CD4-positive, alpha-beta memory T cell (primary cell): ENCODE measurements at regions of chr16 and their contacts with region 1.

Region 1: DNA sequence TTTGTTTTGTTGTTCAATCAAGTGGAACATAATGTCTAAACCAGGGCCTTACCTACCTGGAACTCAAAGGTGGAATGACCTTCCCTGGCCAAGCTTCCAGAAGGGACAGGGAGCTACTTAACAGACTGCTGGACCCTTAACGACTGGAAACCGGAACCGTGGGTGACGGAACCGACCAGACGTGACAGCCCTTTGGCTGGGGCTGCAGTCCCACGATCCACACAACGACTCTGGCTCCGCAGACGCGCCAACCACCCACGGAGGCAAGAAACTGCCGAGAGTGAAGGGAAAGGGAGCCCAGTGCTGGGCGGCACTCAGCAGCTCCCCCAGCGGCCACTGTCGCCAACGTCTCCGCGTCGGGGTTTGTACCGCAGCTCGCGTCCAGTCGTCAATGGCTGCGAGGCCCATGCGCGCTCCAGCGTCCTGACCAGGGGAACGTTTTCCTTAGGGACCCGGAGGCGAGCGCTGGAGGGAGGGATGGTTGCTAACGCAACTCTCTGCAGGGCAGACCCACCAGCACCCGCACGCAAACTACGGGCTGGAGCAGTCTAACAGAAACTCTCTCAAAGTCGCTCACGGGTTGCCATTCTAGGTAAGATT is 5.5 kb upstream of the KIF22 start:
- DNase-seq: peak; percentile 70 to 77 (median 74)
- H3K4me3 ChIP-seq: peak overlapping the region in 1 of 2 donors; percentile 44
- H3K4me3 Mint-ChIP-seq: peak overlapping the region; percentile 57 to 86 (median 78)
- H3K27ac ChIP-seq: peak overlapping the region; percentile 47
- H3K27ac Mint-ChIP-seq: peak overlapping the region; percentile 33 to 92 (median 87)
- H3K4me1 ChIP-seq: peaks cover 25% of the 10 kb centered on the region
- H3K4me1 Mint-ChIP-seq: peaks cover 12 to 30% (median 24%) of the 10 kb centered on the region in 4 donors
- H3K27me3 ChIP-seq: no peaks in the 10 kb centered on the region
- H3K27me3 Mint-ChIP-seq: no peaks in the 10 kb centered on the region

Region 2: GRCh38 chr16:29710227-29711219 is 74.5 kb before region 1 on chr16:
- CTCF ChIA-PET with region 1: interaction called, 8 read pairs
- POLR2A ChIA-PET with region 1: interaction called, 6 read pairs
- intact Hi-C with region 1: loop called (anchors 1 kb)
- DNase-seq: peak; percentile 64 to 73 (median 69)
- H3K4me3 ChIP-seq: no peak overlapping the region
- H3K4me3 Mint-ChIP-seq: peak overlapping the region in 1 of 8 donors; percentile 12
- H3K27ac ChIP-seq: no peak overlapping the region
- H3K27ac Mint-ChIP-seq: peak overlapping the region in 6 of 7 donors; percentile 8 to 95 (median 89)
- H3K4me1 ChIP-seq: peaks cover 10% of the 10 kb centered on the region
- H3K4me1 Mint-ChIP-seq: peaks cover 6 to 25% (median 12%) of the 10 kb centered on the region in 4 donors
- H3K27me3 ChIP-seq: no peaks in the 10 kb centered on the region
- H3K27me3 Mint-ChIP-seq: no peaks in the 10 kb centered on the region

Region 3: DNA sequence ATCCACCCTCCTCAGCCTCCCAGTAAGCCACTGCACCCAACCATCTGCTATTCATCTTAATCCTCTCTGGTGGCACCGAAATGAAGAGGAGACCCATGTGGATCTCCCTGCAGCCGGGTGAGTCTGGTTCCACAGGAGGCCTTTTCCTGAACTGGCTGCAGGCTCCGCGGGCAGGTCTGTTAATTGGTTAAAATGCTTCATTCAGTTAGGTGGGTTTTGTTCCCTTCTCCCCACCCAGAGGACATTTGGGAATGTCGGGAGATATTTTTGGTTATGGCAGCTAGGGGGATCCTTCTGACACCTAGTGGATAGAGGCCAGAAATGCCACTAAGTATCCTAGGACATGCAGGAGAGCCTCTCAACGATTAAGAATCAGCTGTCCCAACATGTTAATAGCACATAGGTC is 55.9 kb before region 1 on chr16:
- CTCF ChIA-PET with region 1: interaction called, 53 read pairs
- POLR2A ChIA-PET with region 1: interaction called, 14 read pairs
- intact Hi-C with region 1: no loop called
- DNase-seq: no peak
- H3K4me3 ChIP-seq: no peak overlapping the region
- H3K4me3 Mint-ChIP-seq: peak overlapping the region in 1 of 8 donors; percentile 20
- H3K27ac ChIP-seq: no peak overlapping the region
- H3K27ac Mint-ChIP-seq: peak overlapping the region in 3 of 7 donors; percentile 24 to 66 (median 36)
- H3K4me1 ChIP-seq: peaks cover 14% of the 10 kb centered on the region
- H3K4me1 Mint-ChIP-seq: peaks cover 17 to 32% (median 21%) of the 10 kb centered on the region in 4 donors
- H3K27me3 ChIP-seq: no peaks in the 10 kb centered on the region
- H3K27me3 Mint-ChIP-seq: no peaks in the 10 kb centered on the region

Region 4: GRCh38 chr16:29745853-29746345 is 39.1 kb before region 1 on chr16 and contains the start of gene C16orf54:
- CTCF ChIA-PET with region 1: interaction called, 39 read pairs
- POLR2A ChIA-PET with region 1: interaction called, 183 read pairs
- intact Hi-C with region 1: loop called (anchors 1 kb)
- DNase-seq: peak; percentile 98 to 99 (median 98)
- H3K4me3 ChIP-seq: peak within 1 kb of the TSS; percentile 67 to 93
- H3K4me3 Mint-ChIP-seq: peak within 1 kb of the TSS; percentile 96 to 100 (median 99)
- H3K27ac ChIP-seq: peak within 1 kb of the TSS; percentile 94
- H3K27ac Mint-ChIP-seq: peak within 1 kb of the TSS; percentile 98 to 100 (median 100)
- H3K4me1 ChIP-seq: peaks cover 78% of the 10 kb centered on the region
- H3K4me1 Mint-ChIP-seq: peaks cover 39 to 79% (median 54%) of the 10 kb centered on the region in 4 donors
- H3K27me3 ChIP-seq: no peaks in the 10 kb centered on the region
- H3K27me3 Mint-ChIP-seq: peaks cover 0 to 2% of the 10 kb centered on the region in 2 donors
- total RNA-seq, gene C16orf54: 139 to 143 TPM

Region 5: DNA sequence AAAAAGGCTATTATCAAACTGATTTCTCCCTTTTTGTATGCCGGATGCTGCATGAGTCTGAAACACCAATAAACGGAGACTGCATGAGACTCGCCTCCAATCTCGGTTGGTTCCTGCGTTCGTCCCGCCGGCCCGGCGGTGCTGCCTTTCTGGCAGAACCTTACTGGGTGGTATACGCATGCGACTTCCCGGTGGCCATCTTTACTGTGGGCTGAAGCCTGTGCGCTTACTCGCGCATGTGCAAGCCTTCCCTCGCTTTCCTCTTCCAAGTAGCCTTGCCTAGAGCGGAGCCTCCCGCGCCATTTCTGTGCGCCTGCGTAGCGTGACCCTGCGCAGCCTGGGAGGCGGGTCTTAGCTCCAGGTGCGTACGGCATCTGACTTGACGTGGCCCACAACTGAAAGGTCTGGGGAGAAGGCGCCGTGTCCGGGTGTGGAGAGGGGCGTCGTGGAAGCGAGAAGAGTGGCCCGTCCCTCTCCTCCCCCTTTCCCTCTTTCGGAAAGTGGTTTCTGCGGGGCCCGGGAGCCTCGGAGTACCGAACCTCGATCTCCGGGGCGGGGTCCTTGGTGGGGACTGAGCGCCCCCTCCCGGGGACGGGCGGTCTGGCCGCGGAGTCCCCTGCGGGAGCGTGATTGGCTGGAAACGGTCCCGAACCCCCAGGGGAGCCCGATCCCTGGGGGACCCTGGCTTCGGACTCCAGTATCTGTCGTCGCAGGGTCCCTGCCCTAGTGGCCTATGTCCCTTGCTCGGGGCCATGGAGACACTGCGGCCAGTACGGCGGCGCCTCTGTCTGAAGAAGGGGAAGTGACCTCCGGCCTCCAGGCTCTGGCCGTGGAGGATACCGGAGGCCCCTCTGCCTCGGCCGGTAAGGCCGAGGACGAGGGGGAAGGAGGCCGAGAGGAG is 31.0 kb after region 1 on chr16 and contains the start of gene PAGR1:
- CTCF ChIA-PET with region 1: interaction called, 20 read pairs
- POLR2A ChIA-PET with region 1: interaction called, 522 read pairs
- intact Hi-C with region 1: loop called (anchors 1 kb)
- DNase-seq: peak; percentile 99 to 100 (median 99)
- H3K4me3 ChIP-seq: peak within 1 kb of the TSS; percentile 91 to 95
- H3K4me3 Mint-ChIP-seq: peak within 1 kb of the TSS; percentile 95 to 99 (median 98)
- H3K27ac ChIP-seq: peak within 1 kb of the TSS; percentile 77
- H3K27ac Mint-ChIP-seq: peak within 1 kb of the TSS; percentile 94 to 100 (median 98)
- H3K4me1 ChIP-seq: peaks cover 66% of the 10 kb centered on the region
- H3K4me1 Mint-ChIP-seq: peaks cover 30 to 87% (median 56%) of the 10 kb centered on the region in 4 donors
- H3K27me3 ChIP-seq: no peaks in the 10 kb centered on the region
- H3K27me3 Mint-ChIP-seq: peaks cover 0 to 2% of the 10 kb centered on the region in 2 donors
- total RNA-seq, gene PAGR1: 43.7 to 44.9 TPM